Activated CD4-positive, alpha-beta memory T cell treated with anti-CD3 and anti-CD28 coated beads for 36 hours (primary cell): ENCODE measurements at regions of chr12 and their contacts with region 1.

Region 1: GRCh38 chr12:122871851-122872780 is 23.8 kb downstream of the VPS37B start:
- DNase-seq: peak; percentile 85
- H3K4me3 Mint-ChIP-seq: peak overlapping the region; percentile 24
- H3K27ac Mint-ChIP-seq: peak overlapping the region; percentile 1
- H3K4me1 Mint-ChIP-seq: peaks cover 60% of the 10 kb centered on the region
- H3K27me3 Mint-ChIP-seq: peaks cover 17% of the 10 kb centered on the region

Region 2: DNA sequence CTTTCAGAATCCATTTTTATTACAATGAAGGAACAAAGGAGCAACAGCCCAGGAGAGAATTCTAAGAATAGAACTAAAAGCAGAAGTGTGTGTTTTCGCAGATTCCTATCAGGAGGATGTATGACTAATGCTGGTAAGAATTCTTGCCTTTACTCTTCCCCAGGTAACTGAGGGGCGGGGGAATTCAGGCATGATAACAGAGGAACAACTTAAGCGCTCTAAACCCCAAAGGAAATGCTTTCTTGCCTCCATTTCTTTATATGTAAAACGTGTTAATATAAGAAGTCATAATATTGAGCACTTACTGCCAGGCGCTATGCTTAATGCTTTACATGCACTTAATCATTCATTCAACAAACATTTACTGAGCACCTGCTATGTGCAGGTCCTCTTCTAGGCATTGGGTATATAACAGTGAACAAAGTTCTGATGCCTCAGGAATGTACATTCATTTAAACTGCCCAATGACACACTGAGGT is 146.0 kb before region 1 on chr12:
- CTCF ChIA-PET with region 1: no interaction called
- POLR2A ChIA-PET with region 1: no interaction called
- intact Hi-C with region 1: loop called (anchors 10 kb)
- DNase-seq: peak; percentile 51
- H3K4me3 Mint-ChIP-seq: peak overlapping the region; percentile 19
- H3K27ac Mint-ChIP-seq: peak overlapping the region; percentile 74
- H3K4me1 Mint-ChIP-seq: peaks cover 49% of the 10 kb centered on the region
- H3K27me3 Mint-ChIP-seq: peaks cover 6% of the 10 kb centered on the region

Region 3: GRCh38 chr12:122860346-122861090 is 11.6 kb before region 1 on chr12:
- CTCF ChIA-PET with region 1: interaction called, 36 read pairs
- POLR2A ChIA-PET with region 1: interaction called, 3 read pairs
- intact Hi-C with region 1: no loop called
- DNase-seq: peak; percentile 88
- H3K4me3 Mint-ChIP-seq: no peak overlapping the region
- H3K27ac Mint-ChIP-seq: no peak overlapping the region
- H3K4me1 Mint-ChIP-seq: no peaks in the 10 kb centered on the region
- H3K27me3 Mint-ChIP-seq: no peaks in the 10 kb centered on the region

Region 4: GRCh38 chr12:122888232-122888867 is 16.2 kb after region 1 on chr12:
- CTCF ChIA-PET with region 1: interaction called, 15 read pairs
- POLR2A ChIA-PET with region 1: interaction called, 3 read pairs
- intact Hi-C with region 1: loop called (anchors 1 kb)
- DNase-seq: peak; percentile 65
- H3K4me3 Mint-ChIP-seq: peak overlapping the region; percentile 70
- H3K27ac Mint-ChIP-seq: peak overlapping the region; percentile 88
- H3K4me1 Mint-ChIP-seq: peaks cover 77% of the 10 kb centered on the region
- H3K27me3 Mint-ChIP-seq: peaks cover 5% of the 10 kb centered on the region

Region 5: GRCh38 chr12:122946690-122947341 is 74.7 kb after region 1 on chr12:
- CTCF ChIA-PET with region 1: interaction called, 5 read pairs
- POLR2A ChIA-PET with region 1: no interaction called
- intact Hi-C with region 1: loop called (anchors 2 kb)
- DNase-seq: peak; percentile 95
- H3K4me3 Mint-ChIP-seq: no peak overlapping the region
- H3K27ac Mint-ChIP-seq: peak overlapping the region; percentile 35
- H3K4me1 Mint-ChIP-seq: peaks cover 20% of the 10 kb centered on the region
- H3K27me3 Mint-ChIP-seq: no peaks in the 10 kb centered on the region

Region 6: DNA sequence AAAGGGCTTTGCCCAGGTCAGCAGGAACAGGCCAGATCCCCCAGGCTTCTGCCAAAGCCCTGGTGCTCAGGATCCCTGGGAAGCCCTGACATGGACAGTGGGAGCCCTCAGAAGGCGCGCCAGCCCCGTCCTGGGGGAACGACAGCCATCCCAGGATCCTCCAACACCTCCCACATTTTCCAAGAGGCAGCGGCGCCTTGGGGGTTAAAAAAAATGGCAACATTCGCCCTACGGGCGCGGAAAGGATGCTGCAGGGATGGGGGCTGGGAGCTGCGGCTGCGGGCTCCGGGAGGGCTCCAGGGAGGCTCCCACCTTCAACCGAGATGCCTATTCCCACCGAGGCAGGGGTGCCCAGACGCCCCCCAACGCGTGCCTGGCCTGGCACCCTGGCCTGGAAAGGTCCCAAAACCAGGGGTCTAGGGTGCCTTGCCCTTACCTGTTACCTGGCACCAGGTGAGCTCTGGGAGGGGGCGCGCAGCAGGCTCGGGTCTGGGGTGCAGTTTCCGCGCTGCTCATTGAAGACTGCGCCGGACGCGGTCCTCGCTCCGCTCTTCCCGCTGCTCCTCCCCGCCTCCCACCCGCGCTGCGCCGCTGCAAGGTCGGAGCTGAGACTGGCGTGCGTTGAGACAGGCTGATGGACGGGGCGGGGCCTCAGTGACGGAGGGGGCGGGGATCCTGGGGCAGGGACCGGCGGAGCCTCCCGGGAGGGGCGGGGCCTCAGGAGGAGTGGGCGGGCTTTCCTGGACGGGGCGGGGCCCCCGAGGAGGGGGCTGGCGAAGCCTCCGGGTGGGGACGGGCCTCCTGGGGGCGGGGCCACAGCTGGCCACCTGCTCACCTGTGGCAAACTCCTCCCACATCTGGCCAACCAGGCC is 94.0 kb after region 1 on chr12 and contains the start of gene ABCB9:
- CTCF ChIA-PET with region 1: no interaction called
- POLR2A ChIA-PET with region 1: no interaction called
- intact Hi-C with region 1: no loop called
- DNase-seq: peak; percentile 98
- H3K4me3 Mint-ChIP-seq: peak within 1 kb of the TSS; percentile 62
- H3K27ac Mint-ChIP-seq: no peak within 1 kb of the TSS
- H3K4me1 Mint-ChIP-seq: peaks cover 5% of the 10 kb centered on the region
- H3K27me3 Mint-ChIP-seq: no peaks in the 10 kb centered on the region
- total RNA-seq, gene ABCB9: 2.7 to 3.6 TPM